Activated CD4-positive, alpha-beta memory T cell treated with anti-CD3 and anti-CD28 coated beads for 36 hours (primary cell): ENCODE measurements at regions of chr14 and their contacts with region 1.

Region 1: DNA sequence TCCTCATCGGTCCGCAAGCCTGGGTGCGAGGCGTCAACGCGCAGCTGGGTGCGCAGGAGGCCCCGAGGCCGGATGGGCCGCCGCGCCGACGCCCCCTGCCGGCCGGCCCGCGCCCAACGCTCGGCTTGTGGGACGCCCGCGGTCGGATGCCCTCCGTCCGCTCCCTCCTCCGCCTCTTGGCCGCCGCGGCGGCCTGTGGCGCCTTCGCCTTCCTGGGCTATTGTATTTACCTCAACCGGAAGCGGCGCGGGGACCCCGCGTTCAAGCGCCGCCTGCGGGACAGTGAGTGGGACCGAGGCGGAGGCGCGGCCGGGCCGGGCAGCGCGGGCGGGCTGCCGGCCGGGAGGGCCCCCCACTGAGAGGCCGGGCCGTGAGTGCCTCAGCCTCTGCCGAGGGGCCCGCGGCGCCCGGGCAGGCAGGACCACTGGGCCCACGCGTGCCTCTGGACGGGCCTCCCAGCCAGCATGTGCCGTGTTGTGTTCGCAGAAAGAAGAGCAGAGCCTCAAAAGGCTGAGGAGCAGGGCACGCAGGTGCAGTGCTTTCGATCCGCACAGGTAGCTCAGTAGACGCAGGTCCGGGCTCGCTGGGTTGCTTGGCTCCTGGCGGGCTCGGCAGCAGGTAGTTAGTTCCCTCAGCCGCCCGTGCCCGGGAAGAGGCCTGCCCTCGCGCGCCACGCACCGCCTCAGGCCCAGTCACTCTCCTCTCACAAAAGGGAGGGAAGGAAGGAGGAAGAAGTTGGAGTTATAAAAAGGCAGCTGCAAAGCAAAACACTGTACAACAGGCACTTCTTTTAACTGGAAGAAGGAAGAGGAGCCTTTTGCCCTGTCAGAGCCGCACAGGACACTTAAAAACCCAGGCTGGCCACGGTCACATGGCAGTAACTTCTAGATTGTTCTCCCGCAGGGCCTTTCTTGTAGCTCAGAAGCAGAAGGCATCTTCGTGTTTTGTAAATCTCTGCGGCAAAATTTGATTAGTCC is at the start of gene TOMM20L:
- DNase-seq: peak; percentile 80
- H3K4me3 Mint-ChIP-seq: peak within 1 kb of the TSS; percentile 66
- H3K27ac Mint-ChIP-seq: peak within 1 kb of the TSS; percentile 58
- H3K4me1 Mint-ChIP-seq: peaks cover 11% of the 10 kb centered on the region
- H3K27me3 Mint-ChIP-seq: no peaks in the 10 kb centered on the region
- total RNA-seq, gene TOMM20L: not detected

Region 2: GRCh38 chr14:58376791-58377190 is 19.3 kb before region 1 on chr14:
- CTCF ChIA-PET with region 1: interaction called, 21 read pairs
- POLR2A ChIA-PET with region 1: no interaction called
- intact Hi-C with region 1: no loop called
- DNase-seq: no peak
- H3K4me3 Mint-ChIP-seq: no peak overlapping the region
- H3K27ac Mint-ChIP-seq: no peak overlapping the region
- H3K4me1 Mint-ChIP-seq: no peaks in the 10 kb centered on the region
- H3K27me3 Mint-ChIP-seq: no peaks in the 10 kb centered on the region

Region 3: DNA sequence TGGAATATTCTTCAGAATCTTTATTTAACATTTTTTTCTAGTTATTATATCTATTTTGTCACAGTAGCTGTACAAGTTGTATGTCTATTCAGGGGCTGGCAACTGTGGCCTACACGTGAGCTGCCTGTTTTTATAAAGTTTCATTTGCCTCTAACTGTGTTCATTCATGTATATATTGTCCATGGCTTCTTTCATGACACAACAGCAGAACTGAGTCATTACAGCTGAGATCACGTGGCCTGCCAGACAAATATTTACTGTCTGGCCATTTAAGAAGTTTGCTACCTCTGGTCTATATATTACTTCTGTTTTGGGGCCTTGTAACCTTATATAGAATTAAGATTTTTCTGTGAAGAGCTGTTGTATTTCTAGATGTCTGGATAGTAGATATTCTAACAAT is 69.3 kb after region 1 on chr14:
- CTCF ChIA-PET with region 1: no interaction called
- POLR2A ChIA-PET with region 1: no interaction called
- intact Hi-C with region 1: no loop called
- DNase-seq: no peak
- H3K4me3 Mint-ChIP-seq: no peak overlapping the region
- H3K27ac Mint-ChIP-seq: no peak overlapping the region
- H3K4me1 Mint-ChIP-seq: no peaks in the 10 kb centered on the region
- H3K27me3 Mint-ChIP-seq: no peaks in the 10 kb centered on the region